Activated naive CD4-positive, alpha-beta T cell treated with anti-CD3 and anti-CD28 coated beads for 36 hours (primary cell): ENCODE measurements at regions of chr1 and their contacts with region 1.

Region 1: GRCh38 chr1:154558575-154559465 is at the start of gene UBE2Q1:
- DNase-seq: peak; percentile 99
- H3K4me3 Mint-ChIP-seq: peak within 1 kb of the TSS; percentile 91
- H3K27ac Mint-ChIP-seq: peak within 1 kb of the TSS; percentile 92
- H3K4me1 Mint-ChIP-seq: peaks cover 28% of the 10 kb centered on the region
- H3K27me3 Mint-ChIP-seq: no peaks in the 10 kb centered on the region
- total RNA-seq, gene UBE2Q1: 79.2 to 84.6 TPM

Region 2: GRCh38 chr1:154574716-154575115 is 15.9 kb after region 1 on chr1:
- CTCF ChIA-PET with region 1: interaction called, 15 read pairs
- intact Hi-C with region 1: no loop called
- DNase-seq: no peak
- H3K4me3 Mint-ChIP-seq: no peak overlapping the region
- H3K27ac Mint-ChIP-seq: no peak overlapping the region
- H3K4me1 Mint-ChIP-seq: no peaks in the 10 kb centered on the region
- H3K27me3 Mint-ChIP-seq: peaks cover 3% of the 10 kb centered on the region

Region 3: GRCh38 chr1:154669464-154670282 is 110.9 kb after region 1 on chr1:
- CTCF ChIA-PET with region 1: interaction called, 12 read pairs
- intact Hi-C with region 1: loop called (anchors 1 kb)
- DNase-seq: peak; percentile 90
- H3K4me3 Mint-ChIP-seq: no peak overlapping the region
- H3K27ac Mint-ChIP-seq: no peak overlapping the region
- H3K4me1 Mint-ChIP-seq: peaks cover 34% of the 10 kb centered on the region
- H3K27me3 Mint-ChIP-seq: no peaks in the 10 kb centered on the region

Region 4: DNA sequence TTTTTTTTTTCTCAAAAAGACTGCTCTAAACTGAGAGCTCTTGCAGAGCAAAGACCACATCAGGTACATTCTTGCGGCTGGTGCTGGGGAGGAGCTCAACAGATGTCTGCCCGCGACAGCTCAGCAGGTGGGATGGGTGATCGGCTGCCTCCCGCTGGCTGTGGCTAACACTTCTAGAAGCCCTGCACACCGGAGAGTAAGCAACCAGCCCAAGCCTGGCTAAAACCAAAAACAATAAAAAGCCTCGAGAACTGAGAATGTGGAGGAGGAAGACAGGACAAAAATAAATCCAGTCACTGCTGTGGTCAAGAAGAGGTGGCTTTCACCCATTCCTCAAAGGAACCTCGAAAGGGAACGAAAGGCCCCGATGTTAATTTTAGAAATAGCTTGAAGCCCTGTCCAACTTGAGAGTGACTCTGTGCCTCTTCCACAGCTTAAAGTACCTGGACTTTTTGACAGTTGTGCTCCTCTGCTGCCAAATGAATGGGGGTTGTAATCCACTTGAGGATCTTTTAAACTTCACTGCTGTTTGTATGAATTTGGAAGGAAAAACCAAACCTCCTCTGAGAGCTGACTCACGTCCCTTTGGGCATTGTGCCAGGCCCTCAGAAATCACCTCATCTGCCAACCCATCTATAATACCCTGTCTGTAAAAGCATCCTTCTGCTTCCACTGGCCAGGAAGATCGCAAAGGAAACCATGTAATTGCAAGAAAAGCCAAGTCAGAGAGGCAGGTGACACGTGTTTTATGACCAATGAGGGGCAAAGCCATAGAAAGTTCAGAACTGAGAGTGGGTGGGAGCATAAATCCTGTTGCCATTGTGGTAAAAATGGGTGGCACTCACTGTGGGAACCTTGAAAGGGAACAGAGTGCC is 232.7 kb after region 1 on chr1:
- CTCF ChIA-PET with region 1: no interaction called
- intact Hi-C with region 1: loop called (anchors 1 kb)
- DNase-seq: peak; percentile 92
- H3K4me3 Mint-ChIP-seq: peak overlapping the region; percentile 47
- H3K27ac Mint-ChIP-seq: peak overlapping the region; percentile 88
- H3K4me1 Mint-ChIP-seq: peaks cover 29% of the 10 kb centered on the region
- H3K27me3 Mint-ChIP-seq: no peaks in the 10 kb centered on the region

Region 5: GRCh38 chr1:154878371-154879022 is 319.7 kb after region 1 on chr1:
- CTCF ChIA-PET with region 1: interaction called, 6 read pairs
- intact Hi-C with region 1: loop called (anchors 1 kb)
- DNase-seq: peak; percentile 84
- H3K4me3 Mint-ChIP-seq: no peak overlapping the region
- H3K27ac Mint-ChIP-seq: no peak overlapping the region
- H3K4me1 Mint-ChIP-seq: peaks cover 10% of the 10 kb centered on the region
- H3K27me3 Mint-ChIP-seq: no peaks in the 10 kb centered on the region

Region 6: DNA sequence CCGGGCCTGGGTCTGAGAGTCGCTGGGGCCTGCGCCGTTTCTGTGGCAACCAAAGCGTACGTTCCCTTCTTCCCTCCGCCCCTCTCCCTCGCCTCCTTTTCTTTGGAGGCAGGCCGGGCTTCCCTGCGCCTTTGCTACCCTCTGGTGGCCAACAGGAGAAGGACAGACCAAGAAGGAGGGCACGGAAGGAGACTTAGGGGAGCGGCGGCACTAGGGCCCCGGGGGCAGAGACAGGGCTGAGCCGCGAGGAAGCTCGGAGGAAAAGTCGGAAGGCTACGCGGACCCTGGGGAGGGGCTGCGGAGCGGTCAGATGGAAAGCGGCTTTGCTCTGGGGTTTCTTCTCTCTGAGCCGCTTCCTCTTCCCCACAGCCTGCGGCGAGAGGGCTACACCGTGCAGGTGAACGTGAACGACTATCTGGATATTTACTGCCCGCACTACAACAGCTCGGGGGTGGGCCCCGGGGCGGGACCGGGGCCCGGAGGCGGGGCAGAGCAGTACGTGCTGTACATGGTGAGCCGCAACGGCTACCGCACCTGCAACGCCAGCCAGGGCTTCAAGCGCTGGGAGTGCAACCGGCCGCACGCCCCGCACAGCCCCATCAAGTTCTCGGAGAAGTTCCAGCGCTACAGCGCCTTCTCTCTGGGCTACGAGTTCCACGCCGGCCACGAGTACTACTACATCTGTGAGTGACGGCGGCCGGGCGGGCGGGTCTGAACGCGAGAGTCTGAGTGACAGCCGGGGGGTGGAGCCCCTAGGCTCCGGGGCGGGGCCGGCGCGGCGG is 526.1 kb after region 1 on chr1:
- CTCF ChIA-PET with region 1: interaction called, 3 read pairs
- intact Hi-C with region 1: loop called (anchors 2 kb)
- DNase-seq: peak; percentile 94
- H3K4me3 Mint-ChIP-seq: peak overlapping the region; percentile 95
- H3K27ac Mint-ChIP-seq: peak overlapping the region; percentile 88
- H3K4me1 Mint-ChIP-seq: peaks cover 34% of the 10 kb centered on the region
- H3K27me3 Mint-ChIP-seq: peaks cover 33% of the 10 kb centered on the region